A549 (cell line): ENCODE measurements at regions of chr11 and their contacts with region 1.

Region 1: GRCh38 chr11:126607374-126607773 is 251.9 kb downstream of the ST3GAL4 start:
- DNase-seq: peak; percentile 44 to 59
- ATAC-seq: peak; percentile 98
- H3K4me3 ChIP-seq: no peak overlapping the region
- H3K27ac ChIP-seq: peak overlapping the region in 1 of 2 experiments; percentile 52; a peak in 2 of 6 replicates
- H3K4me1 ChIP-seq: 0 out of 3 replicates have a peak, but pooled peaks cover 4% of the 10 kb centered on the region
- CTCF ChIP-seq: peak; percentile 72
- EP300 ChIP-seq: no peak
- POLR2A ChIP-seq: no peak
- RAD21 ChIP-seq: peak; percentile 84 to 88

Region 2: GRCh38 chr11:126978911-126979310 is 371.5 kb after region 1 on chr11:
- CTCF ChIA-PET with region 1: interaction called, 11 read pairs
- POLR2A ChIA-PET with region 1: no interaction called
- DNase-seq: no peak
- ATAC-seq: no peak
- H3K4me3 ChIP-seq: no peak overlapping the region
- H3K27ac ChIP-seq: no peak overlapping the region
- H3K4me1 ChIP-seq: no peaks in the 10 kb centered on the region
- CTCF ChIP-seq: no peak
- EP300 ChIP-seq: no peak
- POLR2A ChIP-seq: no peak
- RAD21 ChIP-seq: no peak